GM12878 (cell line): ENCODE measurements at regions of chr11 and their contacts with region 1.

Region 1: DNA sequence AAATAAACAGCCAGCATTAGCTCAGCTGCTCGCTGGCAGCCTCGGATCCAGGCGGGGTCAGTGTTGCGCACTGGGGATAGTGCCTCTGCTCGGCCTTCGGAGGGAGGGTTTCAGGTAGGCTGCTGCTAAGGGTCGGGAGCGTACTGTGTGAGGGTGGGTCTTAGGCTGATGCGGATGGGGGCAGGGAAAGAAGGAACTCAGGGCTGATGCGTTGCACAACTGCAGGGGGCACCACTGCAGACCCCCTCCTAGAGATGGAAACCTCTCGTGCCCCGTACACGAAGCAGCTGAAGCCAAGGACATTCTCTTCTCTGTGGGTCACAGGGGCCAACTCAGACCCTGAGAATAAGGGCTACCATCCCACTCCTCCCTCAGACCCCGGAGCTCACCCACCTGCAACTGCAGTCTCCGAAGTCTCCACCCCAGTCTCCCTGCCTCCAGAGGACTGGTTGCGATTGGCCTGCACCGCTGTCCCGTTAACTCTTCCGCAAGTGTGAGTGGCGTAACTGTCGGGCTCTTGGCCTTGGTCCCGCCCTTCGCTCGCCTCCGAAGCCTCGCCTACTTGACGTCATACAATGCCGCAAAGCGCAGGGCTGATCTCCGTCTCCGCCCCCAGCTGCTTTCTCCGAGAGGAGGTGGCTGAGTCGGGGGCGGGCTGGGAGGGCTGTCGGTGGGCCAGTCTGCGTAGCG is at the start of gene KBTBD3:
- DNase-seq: peak; percentile 99
- ATAC-seq: peak; percentile 95
- H3K4me3 ChIP-seq: peak within 1 kb of the TSS; percentile 94
- H3K27ac ChIP-seq: peak within 1 kb of the TSS; percentile 95
- H3K4me1 ChIP-seq: peaks cover 8% of the 10 kb centered on the region
- H3K27me3 ChIP-seq: no peaks in the 10 kb centered on the region
- CTCF ChIP-seq: peak; percentile 47 to 52 (median 52)
- EP300 ChIP-seq: no peak
- POLR2A ChIP-seq: peak; percentile 81
- RAD21 ChIP-seq: no peak
- polyA plus RNA-seq, gene KBTBD3: 15.4 to 18.1 TPM

Region 2: DNA sequence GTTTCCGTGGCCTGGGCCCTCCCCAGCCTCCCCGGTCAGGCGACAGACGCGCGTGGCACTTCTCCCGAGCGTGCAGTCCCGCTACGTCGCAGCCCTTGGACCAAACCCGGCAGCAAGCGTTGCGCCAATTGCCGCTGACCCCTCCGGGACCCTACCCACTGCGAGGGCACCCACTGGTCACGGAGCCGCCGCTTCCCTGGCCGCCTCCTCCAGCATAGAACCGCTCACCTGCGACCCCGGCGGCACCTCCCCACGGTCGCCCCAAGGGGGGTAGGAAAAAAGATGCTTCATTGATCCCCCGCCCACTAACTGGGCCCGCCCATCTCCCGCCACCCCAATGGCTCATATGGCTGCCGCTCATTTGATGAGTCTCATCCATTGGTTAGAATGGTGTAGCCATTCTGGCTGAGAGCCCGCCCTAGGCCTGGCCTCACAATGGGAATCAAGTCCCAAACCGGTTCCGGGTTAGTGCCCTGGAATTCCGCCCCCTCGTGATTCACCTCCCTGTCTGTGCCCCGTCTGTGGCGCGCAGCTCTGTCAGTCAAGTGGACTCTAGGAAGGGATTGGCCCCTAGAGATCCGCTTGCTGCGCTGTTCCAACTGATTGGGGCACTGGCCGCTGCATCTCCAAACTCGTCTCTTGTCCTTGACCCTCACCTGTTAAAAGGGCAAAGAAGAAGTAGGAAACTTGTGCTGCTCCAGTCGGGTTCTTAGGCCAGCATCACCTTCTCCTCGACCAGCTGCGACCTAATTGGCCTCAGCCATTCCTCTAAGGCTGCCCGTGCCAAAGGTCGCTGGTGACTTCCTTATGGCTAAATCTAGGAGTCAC is 54.9 kb before region 1 on chr11 and contains the start of gene MSANTD4:
- CTCF ChIA-PET with region 1: interaction called, 4 read pairs
- POLR2A ChIA-PET with region 1: interaction called, 4 read pairs
- RAD21 ChIA-PET with region 1: no interaction called
- SMC1A ChIA-PET with region 1: interaction called, 3 read pairs
- in situ Hi-C with region 1: no loop called
- intact Hi-C with region 1: loop called (anchors 2 kb)
- DNase-seq: peak; percentile 97
- ATAC-seq: peak; percentile 98
- H3K4me3 ChIP-seq: peak within 1 kb of the TSS; percentile 85
- H3K27ac ChIP-seq: peak within 1 kb of the TSS; percentile 79
- H3K4me1 ChIP-seq: peaks cover 4% of the 10 kb centered on the region
- H3K27me3 ChIP-seq: no peaks in the 10 kb centered on the region
- CTCF ChIP-seq: no peak
- EP300 ChIP-seq: no peak
- POLR2A ChIP-seq: peak; percentile 88
- RAD21 ChIP-seq: no peak
- polyA plus RNA-seq, gene MSANTD4: 8.7 to 8.8 TPM

Region 3: GRCh38 chr11:106063009-106063408 is 14.1 kb before region 1 on chr11:
- CTCF ChIA-PET with region 1: interaction called, 12 read pairs
- POLR2A ChIA-PET with region 1: interaction called, 4 read pairs
- RAD21 ChIA-PET with region 1: interaction called, 5 read pairs
- SMC1A ChIA-PET with region 1: interaction called, 9 read pairs
- in situ Hi-C with region 1: no loop called
- intact Hi-C with region 1: no loop called
- DNase-seq: no peak
- ATAC-seq: peak; percentile 89
- H3K4me3 ChIP-seq: no peak overlapping the region
- H3K27ac ChIP-seq: no peak overlapping the region
- H3K4me1 ChIP-seq: peaks cover 7% of the 10 kb centered on the region; the same call in 1 of the 2 replicates
- H3K27me3 ChIP-seq: no peaks in the 10 kb centered on the region
- CTCF ChIP-seq: no peak
- EP300 ChIP-seq: no peak
- POLR2A ChIP-seq: no peak
- RAD21 ChIP-seq: no peak

Region 4: GRCh38 chr11:106156290-106156937 is 79.3 kb after region 1 on chr11:
- CTCF ChIA-PET with region 1: no interaction called
- POLR2A ChIA-PET with region 1: no interaction called
- RAD21 ChIA-PET with region 1: no interaction called
- SMC1A ChIA-PET with region 1: no interaction called
- in situ Hi-C with region 1: no loop called
- intact Hi-C with region 1: no loop called
- DNase-seq: peak; percentile 12
- ATAC-seq: peak; percentile 80
- H3K4me3 ChIP-seq: no peak overlapping the region
- H3K27ac ChIP-seq: no peak overlapping the region
- H3K4me1 ChIP-seq: no peaks in the 10 kb centered on the region
- H3K27me3 ChIP-seq: no peaks in the 10 kb centered on the region
- CTCF ChIP-seq: peak; percentile 30 to 48 (median 43); a peak in 5 of 6 replicates
- EP300 ChIP-seq: no peak
- POLR2A ChIP-seq: no peak
- RAD21 ChIP-seq: peak; percentile 53